Aorta (tissue), 5 donors: ENCODE measurements at regions of chr6 and their contacts with region 1.

Region 1: GRCh38 chr6:36340618-36341454 is 4.1 kb upstream of the BNIP5 start:
- DNase-seq: peak; percentile 85 to 95
- ATAC-seq: peak; percentile 88
- H3K4me3 ChIP-seq: no peak overlapping the region
- H3K27ac ChIP-seq: no peak overlapping the region
- H3K4me1 ChIP-seq: no peaks in the 10 kb centered on the region
- H3K27me3 ChIP-seq: no peaks in the 10 kb centered on the region

Region 2: DNA sequence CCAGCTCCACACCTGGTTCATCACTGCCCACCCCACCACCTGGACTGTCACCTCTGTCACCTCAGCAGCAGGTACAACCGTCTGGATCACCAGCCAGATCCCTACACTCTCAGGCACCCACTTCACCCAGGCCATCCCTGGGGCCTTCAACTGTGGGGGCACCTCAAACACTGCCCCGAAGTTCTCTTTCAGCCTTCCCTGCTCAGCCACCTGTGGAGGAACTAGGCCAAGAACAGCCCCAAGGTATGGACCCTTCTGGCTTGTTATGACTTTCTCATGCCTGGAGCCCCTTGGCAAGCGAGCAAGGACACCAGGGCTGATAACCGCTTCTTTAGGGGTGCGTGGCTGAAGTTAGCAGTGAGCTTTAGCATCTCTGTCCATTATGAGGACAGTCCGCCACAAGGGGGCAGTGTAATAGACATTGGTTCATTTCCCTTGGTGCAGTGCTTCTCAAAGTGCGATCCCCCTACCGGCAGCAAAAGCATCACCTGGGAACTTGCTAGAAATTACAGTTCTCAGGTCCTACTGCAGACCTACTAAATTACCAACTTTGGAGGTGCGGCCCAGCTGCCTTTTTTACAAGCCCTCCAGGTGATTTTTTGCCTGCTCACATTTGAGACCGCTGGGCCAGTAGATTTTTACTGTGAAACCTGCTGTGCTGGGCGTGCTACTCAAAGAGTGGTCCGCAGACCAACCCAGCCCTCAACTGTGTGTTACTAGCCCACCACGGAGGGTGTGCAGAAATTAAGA is 38.4 kb before region 1 on chr6:
- intact Hi-C with region 1: loop called in 1 of 2 experiments (anchors 5 kb)
- DNase-seq: peak; percentile 88 to 90
- ATAC-seq: peak; percentile 88
- H3K4me3 ChIP-seq: no peak overlapping the region
- H3K27ac ChIP-seq: no peak overlapping the region
- H3K4me1 ChIP-seq: no peaks in the 10 kb centered on the region
- H3K27me3 ChIP-seq: no peaks in the 10 kb centered on the region